RWPE1 (cell line): ENCODE measurements at regions of chr17 and their contacts with region 1.

Region 1: DNA sequence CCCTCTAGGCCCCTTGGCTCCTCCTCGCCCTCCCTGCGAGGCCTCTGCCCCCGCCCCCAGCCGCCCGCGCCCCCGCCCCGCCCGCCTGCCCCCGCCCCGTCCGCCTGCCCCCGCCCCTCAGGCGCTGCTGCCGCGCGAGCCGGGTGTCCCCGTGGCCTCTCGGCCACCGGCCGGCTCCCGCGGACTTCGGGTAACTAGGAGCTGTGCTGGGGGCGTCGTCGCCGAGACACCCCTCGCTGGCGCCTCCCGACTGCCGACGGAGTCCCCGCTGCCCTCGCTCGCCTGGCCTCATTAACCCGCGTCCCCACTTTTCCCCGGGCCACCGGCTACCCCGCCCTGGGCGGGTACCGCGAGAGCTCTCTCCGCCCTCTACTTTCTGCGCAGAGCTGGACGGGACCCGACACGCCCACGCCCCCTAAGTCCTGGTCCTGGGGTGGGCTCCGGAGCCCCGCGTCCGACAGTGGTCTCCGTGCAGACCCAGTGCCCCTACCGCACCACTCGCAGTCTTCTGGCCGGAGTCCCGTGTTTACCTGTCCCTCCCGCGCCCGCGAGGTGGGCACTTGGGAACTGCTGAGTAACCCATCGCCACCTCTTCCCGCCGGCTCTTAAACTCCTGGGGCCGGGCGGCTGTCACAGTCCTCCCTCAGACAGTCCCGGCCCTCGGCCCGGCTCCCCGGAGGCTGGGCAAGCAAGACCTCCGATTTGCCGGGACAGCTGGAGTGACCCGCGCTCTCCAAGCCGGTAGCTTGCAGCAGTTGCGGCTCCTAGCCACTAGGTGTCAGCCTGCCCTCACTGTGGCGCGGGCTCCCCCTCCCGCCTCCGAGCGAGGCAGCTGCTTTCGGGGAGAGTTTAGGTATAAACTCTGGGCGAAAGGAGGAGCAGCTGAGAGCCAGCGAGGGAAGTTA is at the start of gene TLCD1:
- DNase-seq: peak; percentile 82
- H3K27ac ChIP-seq: peak within 1 kb of the TSS; percentile 99
- CTCF ChIP-seq: peak; percentile 99

Region 2: DNA sequence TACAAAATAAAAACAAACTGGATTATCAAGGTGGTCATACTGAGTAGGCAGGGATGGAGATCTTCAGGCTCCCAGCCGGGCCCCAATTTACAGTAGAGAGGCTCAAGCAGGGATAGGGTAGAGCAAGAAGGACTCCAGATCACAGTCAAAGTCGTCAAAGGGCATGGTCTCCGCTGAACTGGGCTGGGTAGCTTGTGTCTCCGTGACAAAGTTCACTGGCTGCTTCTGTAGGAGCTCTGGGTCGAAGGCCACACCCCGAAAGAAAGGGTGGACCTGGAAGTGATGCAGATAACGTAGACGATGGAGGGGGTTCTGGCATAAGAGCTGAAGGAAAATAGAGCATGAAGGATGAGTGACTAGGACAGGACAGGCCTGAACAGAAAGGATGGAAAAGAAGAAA is 116.1 kb before region 1 on chr17:
- CTCF ChIA-PET with region 1: no interaction called
- POLR2A ChIA-PET with region 1: no interaction called
- DNase-seq: no peak
- H3K27ac ChIP-seq: no peak overlapping the region
- CTCF ChIP-seq: no peak

Region 3: DNA sequence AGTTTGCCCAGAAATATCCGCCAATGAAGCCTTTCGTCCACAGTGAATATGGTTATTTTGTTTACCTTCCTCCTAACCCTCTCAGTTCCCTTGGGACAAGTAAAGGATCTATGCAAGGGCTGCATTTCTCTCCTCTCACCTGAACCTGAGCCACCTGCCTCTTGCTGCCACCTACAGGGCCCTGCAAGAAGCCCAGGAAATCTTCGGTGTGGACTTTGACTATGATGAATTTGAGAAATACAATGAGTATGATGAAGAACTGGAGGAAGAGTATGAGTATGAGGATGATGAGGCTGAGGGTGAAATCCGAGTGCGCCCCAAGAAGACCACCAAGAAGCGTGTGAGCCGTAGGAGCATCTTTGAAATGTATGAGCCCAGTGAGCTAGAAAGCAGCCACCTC is 50.5 kb before region 1 on chr17:
- CTCF ChIA-PET with region 1: no interaction called
- POLR2A ChIA-PET with region 1: no interaction called
- DNase-seq: peak; percentile 49
- H3K27ac ChIP-seq: no peak overlapping the region
- CTCF ChIP-seq: 0 out of 2 replicates have a peak, but pooled peaks have one; percentile 23

Region 4: GRCh38 chr17:28743225-28744103 is 17.0 kb after region 1 on chr17 and contains the start of gene TRAF4:
- CTCF ChIA-PET with region 1: interaction called, 249 read pairs
- POLR2A ChIA-PET with region 1: interaction called, 95 read pairs
- DNase-seq: peak; percentile 93
- H3K27ac ChIP-seq: peak within 1 kb of the TSS; percentile 100
- CTCF ChIP-seq: 0 out of 2 replicates have a peak, but pooled peaks have one; percentile 7

Region 5: GRCh38 chr17:28750178-28751047 is 23.9 kb after region 1 on chr17:
- CTCF ChIA-PET with region 1: interaction called, 249 read pairs
- POLR2A ChIA-PET with region 1: interaction called, 95 read pairs
- DNase-seq: peak; percentile 69
- H3K27ac ChIP-seq: peak overlapping the region; percentile 100
- CTCF ChIP-seq: peak; percentile 99

Region 6: DNA sequence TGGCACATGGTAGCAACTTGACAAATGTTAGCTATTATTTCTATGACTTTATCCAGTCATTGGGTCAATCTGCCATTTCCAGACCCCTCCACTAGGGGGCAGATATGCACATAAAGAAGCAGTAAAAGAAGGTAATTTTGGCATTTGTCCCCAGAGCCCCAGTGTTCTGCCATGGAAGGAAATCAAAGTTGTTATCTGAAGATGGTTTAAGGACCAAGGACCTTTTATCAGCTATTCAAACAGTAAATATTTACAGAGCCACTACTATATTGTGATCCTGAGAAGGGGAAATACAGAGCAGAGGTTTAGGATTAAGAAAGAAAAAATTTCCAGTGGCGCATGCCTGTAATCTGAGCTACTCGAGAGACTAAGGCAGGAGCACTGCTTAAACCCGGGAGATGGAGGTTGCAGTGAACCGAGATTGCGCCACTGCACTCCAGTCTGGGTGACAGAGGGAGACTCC is 37.4 kb after region 1 on chr17:
- CTCF ChIA-PET with region 1: interaction called, 25 read pairs
- POLR2A ChIA-PET with region 1: interaction called, 5 read pairs
- DNase-seq: peak; percentile 61
- H3K27ac ChIP-seq: peak overlapping the region; percentile 57
- CTCF ChIP-seq: peak; percentile 87

Region 7: GRCh38 chr17:28792877-28793661 is 66.6 kb after region 1 on chr17:
- CTCF ChIA-PET with region 1: no interaction called
- POLR2A ChIA-PET with region 1: no interaction called
- DNase-seq: no peak
- H3K27ac ChIP-seq: no peak overlapping the region; the same call in 1 of the 2 replicates
- CTCF ChIP-seq: no peak

Region 8: GRCh38 chr17:28865946-28866752 is 139.7 kb after region 1 on chr17:
- CTCF ChIA-PET with region 1: no interaction called
- POLR2A ChIA-PET with region 1: no interaction called
- DNase-seq: no peak
- H3K27ac ChIP-seq: no peak overlapping the region
- CTCF ChIP-seq: no peak

Region 9: DNA sequence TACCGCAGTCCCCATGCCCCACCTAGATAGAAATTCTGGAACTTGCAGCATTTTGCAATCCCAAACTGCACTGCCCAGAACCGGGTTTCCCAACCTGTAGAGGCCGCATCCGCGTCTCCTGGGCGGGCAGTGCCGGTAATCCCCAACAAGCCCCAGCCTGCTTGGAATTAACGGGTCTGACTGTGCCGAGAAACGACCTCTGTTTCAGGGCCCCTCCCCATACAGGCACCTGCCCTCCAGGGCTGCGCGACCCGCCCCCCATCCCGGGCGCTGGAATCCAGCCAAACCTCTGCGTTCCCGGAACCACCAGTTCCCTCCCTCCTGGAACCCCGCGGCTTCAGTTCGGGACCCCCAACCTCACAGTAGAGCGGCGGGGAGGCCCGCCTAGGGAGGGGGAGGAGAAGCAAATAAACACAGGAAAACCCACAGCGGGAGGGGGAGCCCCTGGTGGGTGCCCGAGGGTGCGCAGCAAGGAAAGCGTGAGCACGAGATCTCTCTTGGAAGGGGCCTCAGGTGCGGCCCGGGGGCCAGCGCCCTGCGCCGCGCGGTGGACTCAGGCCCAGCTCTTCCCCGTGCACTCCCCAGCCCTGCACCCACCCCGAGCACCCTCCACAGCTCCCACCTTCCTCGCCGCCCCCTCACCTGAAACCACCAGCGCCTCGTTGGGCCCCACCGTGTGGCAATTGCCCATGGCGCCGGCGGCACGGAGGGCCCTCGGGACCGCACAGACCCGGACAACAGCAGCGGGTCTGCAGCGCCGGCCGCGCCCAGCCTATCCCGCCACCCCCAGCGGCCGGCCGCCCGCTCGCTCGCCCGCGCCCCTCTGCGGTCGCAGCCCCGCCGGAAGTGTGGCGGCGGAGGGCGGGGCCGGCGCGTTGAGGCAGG is 170.6 kb after region 1 on chr17 and contains the start of gene FLOT2:
- CTCF ChIA-PET with region 1: interaction called, 15 read pairs
- POLR2A ChIA-PET with region 1: no interaction called
- DNase-seq: peak; percentile 92
- H3K27ac ChIP-seq: peak within 1 kb of the TSS; percentile 99
- CTCF ChIP-seq: no peak; the same call in 1 of the 2 replicates

Region 10: GRCh38 chr17:28908640-28909167 is 182.2 kb after region 1 on chr17:
- CTCF ChIA-PET with region 1: interaction called, 12 read pairs
- POLR2A ChIA-PET with region 1: no interaction called
- DNase-seq: peak; percentile 33
- H3K27ac ChIP-seq: peak overlapping the region; percentile 65
- CTCF ChIP-seq: no peak

Region 11: DNA sequence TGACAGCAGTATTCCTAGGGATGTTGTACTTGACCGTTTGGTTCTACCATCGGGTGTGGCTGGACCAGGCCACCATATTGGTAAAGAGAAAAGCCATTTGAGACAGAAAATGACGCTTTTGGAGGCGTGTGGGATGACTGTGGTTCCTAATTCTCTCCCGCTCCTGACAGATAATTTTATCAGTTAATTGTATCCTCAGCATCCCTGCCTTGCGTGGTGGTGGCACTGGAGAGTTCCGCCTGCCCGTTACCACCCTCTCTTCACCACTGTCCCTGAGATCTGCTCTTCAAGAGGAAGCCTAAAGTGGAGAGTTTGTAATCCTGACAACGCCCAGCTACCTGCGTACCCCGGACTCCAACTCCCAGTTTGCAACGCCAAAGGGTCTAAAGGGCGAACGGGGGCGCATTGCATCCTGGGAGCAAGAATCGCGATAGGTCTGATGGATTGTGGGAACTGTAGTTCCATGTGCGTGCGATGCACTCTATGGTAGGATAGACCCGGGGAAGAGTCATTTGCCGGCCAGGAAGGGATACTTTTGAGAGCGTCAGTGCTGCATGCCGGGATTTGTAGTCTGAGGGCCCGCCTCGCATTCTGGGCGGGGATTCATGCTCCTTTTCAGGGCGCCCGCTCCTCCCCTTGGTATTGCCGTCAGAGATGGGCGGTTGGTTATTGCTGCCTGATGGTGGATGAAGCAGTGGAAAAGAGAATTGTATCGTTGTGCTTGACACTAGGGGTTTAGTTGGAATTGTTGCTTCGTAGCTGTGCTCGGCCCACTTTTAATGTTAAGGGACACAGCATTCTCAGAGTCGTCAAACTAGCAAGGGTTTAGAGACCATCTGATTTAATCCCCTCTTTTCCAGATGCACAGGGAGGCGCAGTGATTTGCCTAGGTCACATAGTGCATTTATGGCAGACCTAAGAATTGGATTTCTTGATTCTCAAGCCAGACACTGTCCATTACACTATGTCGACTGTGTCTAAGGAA is 225.8 kb after region 1 on chr17:
- CTCF ChIA-PET with region 1: interaction called, 20 read pairs
- POLR2A ChIA-PET with region 1: interaction called, 10 read pairs
- DNase-seq: peak; percentile 97
- H3K27ac ChIP-seq: peak overlapping the region; percentile 96
- CTCF ChIP-seq: no peak